Gastrocnemius medialis (tissue), 4 donors: ENCODE measurements at regions of chr3 and their contacts with region 1.

Region 1: DNA sequence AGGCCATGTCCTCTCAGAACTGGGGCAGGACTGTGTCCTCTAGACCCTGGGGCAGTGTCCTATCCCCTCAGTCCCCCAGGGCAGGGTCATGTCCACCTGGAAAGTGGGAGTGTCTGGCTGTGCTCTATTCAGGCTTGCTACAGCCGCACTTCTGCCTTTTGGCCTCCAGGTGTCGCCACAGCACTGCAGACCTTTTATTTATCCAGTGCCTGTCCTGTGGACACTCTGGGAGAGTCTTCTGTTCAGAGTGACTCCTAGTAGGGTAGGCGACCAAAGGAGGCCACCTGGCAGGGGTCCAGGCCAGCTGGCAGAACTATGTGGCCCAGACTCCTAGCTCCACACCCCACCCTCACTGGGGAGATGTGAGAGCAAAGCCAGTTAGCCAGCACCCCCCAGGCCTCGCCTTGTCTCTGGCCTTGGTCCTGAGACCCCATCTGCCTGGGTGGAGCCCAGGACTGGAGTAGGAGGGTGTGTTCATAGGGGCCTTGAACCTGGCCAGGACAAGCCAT is 3.9 kb downstream of the TMIE start:
- DNase-seq: peak; percentile 52 to 70
- ATAC-seq: peak; percentile 85 to 89
- H3K4me3 ChIP-seq: no peak overlapping the region
- H3K27ac ChIP-seq: no peak overlapping the region
- H3K4me1 ChIP-seq: peaks cover 15 to 34% of the 10 kb centered on the region in 2 donors
- H3K27me3 ChIP-seq: no peaks in the 10 kb centered on the region
- CTCF ChIP-seq: peak; percentile 94 to 99 (median 98)
- POLR2A ChIP-seq: no peak

Region 2: DNA sequence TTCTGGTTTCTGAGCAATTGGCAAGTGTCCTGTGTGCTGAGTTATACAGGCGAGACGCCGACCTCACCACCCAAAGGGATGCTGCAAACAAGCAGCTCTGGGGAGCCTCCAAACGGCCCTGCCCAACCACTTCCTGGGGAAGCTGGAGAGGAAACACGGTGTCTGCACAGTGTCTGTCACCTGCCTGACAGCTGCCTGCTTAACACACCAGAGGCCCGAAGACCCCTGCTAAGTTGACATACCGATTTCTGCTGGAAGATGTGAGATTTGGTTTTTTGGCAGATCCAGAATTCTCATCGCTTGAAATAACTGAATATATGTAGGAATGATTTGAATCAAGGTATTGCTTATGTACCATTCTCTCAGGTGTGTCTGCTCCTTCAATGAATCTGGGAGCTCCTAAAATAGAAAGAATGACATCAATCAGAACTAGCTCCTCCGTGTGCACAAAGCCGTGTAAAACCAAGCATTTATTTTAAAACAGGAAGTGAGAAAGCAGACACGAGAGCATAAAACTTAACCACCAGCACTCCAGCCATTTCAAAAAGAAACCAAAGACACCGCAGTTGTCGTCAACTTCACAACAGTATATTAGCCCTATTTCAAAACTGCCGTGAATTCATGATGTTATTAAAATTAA is 166.2 kb before region 1 on chr3:
- in situ Hi-C with region 1: no loop called
- intact Hi-C with region 1: no loop called
- DNase-seq: peak in 1 of 2 donors; percentile 36
- ATAC-seq: no peak
- H3K4me3 ChIP-seq: no peak overlapping the region
- H3K27ac ChIP-seq: peak overlapping the region; percentile 78 to 89 (median 82)
- H3K4me1 ChIP-seq: peaks cover 21 to 35% of the 10 kb centered on the region in 2 donors
- H3K27me3 ChIP-seq: no peaks in the 10 kb centered on the region
- CTCF ChIP-seq: no peak
- POLR2A ChIP-seq: no peak

Region 3: GRCh38 chr3:46824211-46824970 is 119.3 kb after region 1 on chr3:
- in situ Hi-C with region 1: no loop called
- intact Hi-C with region 1: no loop called
- DNase-seq: no peak
- ATAC-seq: no peak
- H3K4me3 ChIP-seq: no peak overlapping the region
- H3K27ac ChIP-seq: no peak overlapping the region
- H3K4me1 ChIP-seq: no peaks in the 10 kb centered on the region
- H3K27me3 ChIP-seq: no peaks in the 10 kb centered on the region
- CTCF ChIP-seq: no peak
- POLR2A ChIP-seq: no peak

Region 4: DNA sequence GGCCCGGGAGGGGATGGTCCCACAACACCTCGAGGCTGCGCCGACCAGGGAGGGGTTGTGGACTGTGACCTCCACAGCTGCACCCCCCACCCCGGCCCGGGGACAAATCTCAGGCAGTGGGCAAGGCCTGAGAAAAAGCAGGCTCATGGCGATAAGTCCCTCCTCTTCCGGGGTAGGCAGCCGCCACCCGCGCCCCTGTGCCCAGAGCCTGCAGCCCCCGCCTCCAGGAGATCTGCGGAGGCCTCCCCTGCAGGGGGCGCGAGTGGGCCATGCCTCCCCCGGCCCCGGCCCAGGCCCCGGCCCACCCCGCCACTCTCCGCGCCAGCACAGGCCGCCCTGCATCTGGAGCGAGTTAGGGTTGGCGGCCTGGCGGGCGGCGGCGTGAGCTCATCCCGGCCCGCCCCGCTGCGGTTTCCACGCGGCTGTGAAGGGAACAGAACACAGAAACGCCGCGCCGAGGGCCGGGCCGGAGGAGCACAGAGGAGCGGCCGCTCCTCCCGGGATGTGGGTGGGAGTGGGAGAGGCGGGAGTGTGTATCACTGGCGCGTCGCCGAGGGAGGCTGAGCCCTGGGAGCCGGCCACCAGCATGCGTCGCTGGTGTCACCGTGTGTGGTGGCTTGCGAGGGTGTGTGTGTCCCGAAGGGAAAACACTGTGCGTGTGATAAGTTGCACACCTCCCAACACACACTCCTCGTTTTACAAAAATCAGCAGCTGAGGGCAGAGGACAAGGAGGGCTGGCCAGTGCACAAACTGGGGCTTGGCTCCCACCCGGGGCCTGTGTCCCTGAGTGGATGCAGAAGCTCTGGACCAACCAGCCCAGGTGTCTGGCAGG is 140.9 kb after region 1 on chr3:
- in situ Hi-C with region 1: no loop called
- intact Hi-C with region 1: loop called (anchors 5 kb)
- DNase-seq: peak; percentile 41 to 61
- ATAC-seq: peak; percentile 51 to 59
- H3K4me3 ChIP-seq: peak overlapping the region; percentile 51 to 58 (median 55)
- H3K27ac ChIP-seq: peak overlapping the region; percentile 58 to 81 (median 75)
- H3K4me1 ChIP-seq: peaks cover 5 to 25% of the 10 kb centered on the region in 2 donors
- H3K27me3 ChIP-seq: no peaks in the 10 kb centered on the region
- CTCF ChIP-seq: peak in 4 of 5 experiments; percentile 40 to 51 (median 45)
- POLR2A ChIP-seq: peak in 1 of 2 donors; percentile 28

Region 5: DNA sequence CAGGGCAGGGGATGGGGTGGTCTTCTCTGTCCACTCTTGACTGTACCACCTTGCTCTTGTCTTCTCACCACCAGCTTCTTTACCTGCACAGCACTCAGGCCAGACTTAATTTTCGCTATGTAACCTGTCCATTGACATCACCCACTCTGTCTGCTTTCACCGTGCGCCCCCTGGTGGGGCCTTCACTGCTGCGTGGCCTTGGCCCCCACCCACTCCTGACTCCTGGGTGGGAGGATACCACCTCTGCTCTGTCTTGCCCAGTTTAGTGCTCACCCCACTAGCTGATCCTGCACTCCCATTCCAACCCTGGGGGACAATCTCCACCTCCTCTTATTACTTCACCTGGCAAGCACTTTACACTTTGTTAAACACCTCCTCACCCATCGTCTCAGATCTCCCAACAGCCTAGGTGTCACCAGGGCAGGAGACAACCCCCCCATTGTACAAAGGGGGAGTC is 190.2 kb after region 1 on chr3:
- in situ Hi-C with region 1: loop called in 3 of 4 experiments (anchors 5 to 10 kb)
- intact Hi-C with region 1: loop called (anchors 1 kb)
- DNase-seq: peak in 1 of 2 donors; percentile 61
- ATAC-seq: peak in 1 of 2 donors; percentile 29
- H3K4me3 ChIP-seq: no peak overlapping the region
- H3K27ac ChIP-seq: no peak overlapping the region
- H3K4me1 ChIP-seq: peaks cover 11 to 14% of the 10 kb centered on the region in 2 donors
- H3K27me3 ChIP-seq: no peaks in the 10 kb centered on the region
- CTCF ChIP-seq: peak; percentile 70 to 89 (median 87)
- POLR2A ChIP-seq: no peak

Region 6: DNA sequence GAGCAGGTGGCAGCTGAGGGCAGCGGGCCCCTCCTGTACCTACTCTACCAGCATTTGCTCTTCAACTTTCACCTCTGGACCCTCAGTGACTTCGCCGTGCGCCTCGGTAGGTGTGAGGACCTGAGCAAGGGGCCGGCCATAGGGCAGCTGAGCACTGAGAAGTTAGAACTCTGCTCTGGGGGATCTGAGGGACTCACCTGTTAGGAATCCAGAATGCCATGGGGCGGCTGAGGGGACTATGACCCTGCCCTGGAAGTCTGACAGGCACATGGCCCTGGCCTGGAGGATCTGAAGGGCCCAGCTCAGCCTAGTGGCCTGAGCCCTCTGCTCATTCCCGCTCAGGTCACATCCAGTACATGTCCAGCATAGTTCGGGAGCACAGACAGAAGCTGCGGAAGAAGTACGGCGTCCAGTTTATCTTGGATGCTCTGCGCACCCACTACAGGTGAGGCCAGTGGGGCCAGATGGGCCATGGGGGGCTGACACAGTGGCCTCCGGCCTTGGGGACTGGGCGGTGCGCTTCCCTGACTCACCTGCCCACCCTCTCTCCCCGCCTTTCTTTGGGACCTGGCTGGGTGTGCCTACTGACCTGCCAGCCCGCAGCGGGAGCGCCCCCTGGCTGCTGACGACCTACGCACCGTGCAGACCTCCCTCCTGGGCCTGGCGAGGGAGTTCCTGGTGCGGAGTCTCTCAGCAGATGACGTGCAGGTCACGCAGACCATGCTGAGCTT is 293.2 kb after region 1 on chr3:
- in situ Hi-C with region 1: no loop called
- intact Hi-C with region 1: loop called (anchors 5 kb)
- DNase-seq: peak; percentile 38 to 70
- ATAC-seq: peak in 1 of 2 donors; percentile 82
- H3K4me3 ChIP-seq: no peak overlapping the region
- H3K27ac ChIP-seq: no peak overlapping the region
- H3K4me1 ChIP-seq: no peaks in the 10 kb centered on the region
- H3K27me3 ChIP-seq: no peaks in the 10 kb centered on the region
- CTCF ChIP-seq: peak; percentile 71 to 92 (median 89)
- POLR2A ChIP-seq: no peak

Region 7: GRCh38 chr3:47347217-47347801 is 642.2 kb after region 1 on chr3:
- in situ Hi-C with region 1: loop called in 2 of 4 experiments (anchors 25 kb)
- intact Hi-C with region 1: no loop called
- DNase-seq: no peak
- ATAC-seq: peak in 1 of 2 donors; percentile 27
- H3K4me3 ChIP-seq: no peak overlapping the region
- H3K27ac ChIP-seq: no peak overlapping the region
- H3K4me1 ChIP-seq: no peaks in the 10 kb centered on the region
- H3K27me3 ChIP-seq: no peaks in the 10 kb centered on the region
- CTCF ChIP-seq: no peak
- POLR2A ChIP-seq: no peak